Psoas muscle (tissue), 8 donors: ENCODE measurements at regions of chr3 and their contacts with region 1.

Region 1: GRCh38 chr3:58386626-58387365 is 46.8 kb downstream of the PDHB start:
- DNase-seq: no peak
- ATAC-seq: peak in 2 of 4 donors; percentile 33 to 61
- H3K4me3 ChIP-seq: no peak overlapping the region
- H3K27ac ChIP-seq: peak overlapping the region; percentile 42
- H3K4me1 ChIP-seq: peaks cover 7% of the 10 kb centered on the region
- H3K27me3 ChIP-seq: no peaks in the 10 kb centered on the region
- CTCF ChIP-seq: no peak

Region 2: DNA sequence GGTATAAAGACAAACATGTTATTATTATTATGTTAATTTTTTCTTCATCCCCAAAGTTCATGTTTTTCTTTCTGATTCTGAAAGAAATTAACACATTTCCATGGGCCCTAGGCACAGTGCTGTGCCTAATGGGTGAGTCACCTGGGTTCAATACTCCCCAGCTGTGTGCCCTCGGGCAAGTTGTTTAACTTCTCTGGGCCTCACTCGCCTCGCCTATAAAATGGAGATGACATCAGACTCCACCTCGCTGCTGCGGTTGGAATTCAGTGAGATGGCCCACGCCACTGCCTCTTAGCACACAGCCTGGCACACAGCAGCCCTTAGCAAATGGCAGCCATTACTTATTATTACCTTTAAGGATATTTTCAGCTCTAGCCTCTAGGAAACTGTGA is 198.6 kb before region 1 on chr3:
- intact Hi-C with region 1: no loop called
- DNase-seq: no peak
- ATAC-seq: no peak
- H3K4me3 ChIP-seq: no peak overlapping the region
- H3K27ac ChIP-seq: no peak overlapping the region
- H3K4me1 ChIP-seq: no peaks in the 10 kb centered on the region
- H3K27me3 ChIP-seq: no peaks in the 10 kb centered on the region
- CTCF ChIP-seq: no peak

Region 3: GRCh38 chr3:58332575-58333188 is 54.1 kb before region 1 on chr3 and contains the start of gene PXK:
- intact Hi-C with region 1: loop called in 1 of 2 experiments (anchors 5 kb)
- DNase-seq: peak; percentile 88 to 91
- ATAC-seq: peak; percentile 95 to 98 (median 96)
- H3K4me3 ChIP-seq: peak within 1 kb of the TSS; percentile 70
- H3K27ac ChIP-seq: peak within 1 kb of the TSS; percentile 43
- H3K4me1 ChIP-seq: peaks cover 26% of the 10 kb centered on the region
- H3K27me3 ChIP-seq: no peaks in the 10 kb centered on the region
- CTCF ChIP-seq: no peak
- total RNA-seq, gene PXK: 15.5 to 17.5 (median 16.5) TPM

Region 4: DNA sequence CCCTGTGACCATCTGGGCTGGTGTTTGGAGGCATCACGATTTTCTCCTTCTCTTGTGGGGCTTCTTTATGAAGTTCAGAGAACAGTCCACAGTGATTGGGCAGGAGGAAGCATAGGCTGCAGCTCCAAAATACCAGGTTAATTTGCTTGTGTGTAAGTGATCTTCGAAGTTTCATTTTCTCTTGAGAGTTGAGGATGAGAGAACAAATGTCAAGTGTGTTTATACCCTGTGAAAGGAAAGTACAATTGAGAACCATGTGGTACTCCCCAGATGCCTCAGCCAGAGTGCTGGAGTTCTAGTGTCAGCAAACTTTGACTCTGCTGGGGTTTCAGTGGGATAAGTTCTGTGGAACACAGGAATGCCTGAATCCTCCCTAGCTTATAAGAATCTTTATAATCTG is 1020.1 kb after region 1 on chr3:
- intact Hi-C with region 1: no loop called
- DNase-seq: no peak
- ATAC-seq: no peak
- H3K4me3 ChIP-seq: no peak overlapping the region
- H3K27ac ChIP-seq: no peak overlapping the region
- H3K4me1 ChIP-seq: no peaks in the 10 kb centered on the region
- H3K27me3 ChIP-seq: no peaks in the 10 kb centered on the region
- CTCF ChIP-seq: no peak